ENCODE measurements at regions of chr2 and their contacts with region 1.

Region 1: GRCh38 chr2:100852999-100853908 is 33.3 kb downstream of the NPAS2 start:
- DNase-seq: no peak
- H3K4me3 ChIP-seq: no peak overlapping the region
- H3K27ac ChIP-seq: no peak overlapping the region
- H3K4me1 ChIP-seq: no peaks in the 10 kb centered on the region
- H3K27me3 ChIP-seq: no peaks in the 10 kb centered on the region
- CTCF ChIP-seq: no peak
- POLR2A ChIP-seq: no peak

Region 2: DNA sequence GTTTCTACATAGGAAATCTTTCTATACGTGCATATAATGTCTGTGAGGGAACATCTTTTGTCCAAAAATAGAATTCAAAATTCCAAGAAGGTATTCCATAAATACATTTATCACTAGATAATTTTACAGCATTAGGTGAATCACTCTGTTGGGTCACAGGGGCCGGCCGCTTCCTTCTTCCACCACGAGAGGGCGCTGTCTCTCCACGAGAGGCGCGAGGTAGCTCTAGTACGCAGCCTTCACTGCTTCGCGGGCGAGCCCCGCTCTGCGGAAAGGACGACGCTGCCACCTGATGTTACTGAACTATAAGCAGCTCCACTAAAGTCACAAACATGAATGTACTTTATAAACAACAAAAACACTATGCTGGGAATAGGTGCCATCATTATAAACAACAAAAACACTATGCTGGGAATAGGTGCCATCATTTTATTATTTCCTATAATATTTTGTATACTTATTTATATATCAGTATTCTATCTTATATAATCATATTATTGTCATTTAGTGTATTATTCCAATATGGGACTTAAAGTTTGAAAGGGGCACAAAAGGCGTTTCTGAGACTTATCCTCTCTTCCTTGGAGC is 1294.1 kb before region 1 on chr2:
- intact Hi-C with region 1: loop called (anchors 5 kb)
- DNase-seq: peak; percentile 65 to 89
- H3K4me3 ChIP-seq: no peak overlapping the region
- H3K27ac ChIP-seq: no peak overlapping the region
- H3K4me1 ChIP-seq: no peaks in the 10 kb centered on the region
- H3K27me3 ChIP-seq: no peaks in the 10 kb centered on the region
- CTCF ChIP-seq: peak; percentile 92 to 98 (median 96)
- POLR2A ChIP-seq: no peak

Measured in breast epithelium (tissue), 4 donors.